Activated CD4-positive, alpha-beta T cell treated with anti-CD3 and anti-CD28 coated beads, Interleukin-2, amount 10 ng/mL, durations not matched to agents 24 days and 14 days (primary cell): ENCODE measurements at regions of chr1 and their contacts with region 1.

Region 1: DNA sequence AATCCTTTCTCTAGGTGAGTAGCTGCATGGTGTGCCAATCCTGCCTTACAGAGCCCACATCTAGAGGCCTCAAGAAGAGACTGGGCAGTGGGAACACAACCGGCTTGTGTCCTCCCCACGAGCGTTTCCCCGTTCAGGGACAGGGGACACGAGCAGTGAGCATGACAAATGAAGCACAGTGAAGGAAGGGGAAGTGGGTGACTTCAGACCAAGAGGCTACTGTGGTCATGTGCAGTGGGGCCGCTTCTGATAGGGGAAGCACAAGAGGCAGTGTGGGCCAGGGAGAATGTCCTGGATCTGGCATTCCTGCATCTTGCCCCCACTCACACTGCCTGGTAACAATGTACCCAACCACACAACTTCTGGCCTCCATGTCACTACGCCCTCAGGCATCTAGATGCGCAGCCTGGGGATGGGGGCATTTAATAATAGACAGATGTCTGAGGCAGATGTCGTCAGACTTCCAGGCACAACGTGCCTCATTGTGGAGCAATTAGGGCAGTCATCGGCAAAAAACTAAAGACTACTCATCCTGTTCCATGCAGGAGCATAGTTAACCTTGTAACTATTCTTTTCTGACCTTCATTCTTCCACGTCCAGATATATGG is 155.6 kb upstream of the NBPF11 start:
- DNase-seq: no peak
- H3K4me3 Mint-ChIP-seq: no peak overlapping the region
- H3K27ac Mint-ChIP-seq: no peak overlapping the region
- H3K4me1 Mint-ChIP-seq: peaks cover 23% of the 10 kb centered on the region
- H3K27me3 Mint-ChIP-seq: peaks cover 40% of the 10 kb centered on the region

Region 2: GRCh38 chr1:148318123-148318903 is 10.6 kb after region 1 on chr1:
- intact Hi-C with region 1: loop called (anchors 2 kb)
- DNase-seq: peak; percentile 93
- H3K4me3 Mint-ChIP-seq: peak overlapping the region; percentile 93
- H3K27ac Mint-ChIP-seq: peak overlapping the region; percentile 88
- H3K4me1 Mint-ChIP-seq: peaks cover 36% of the 10 kb centered on the region
- H3K27me3 Mint-ChIP-seq: peaks cover 44% of the 10 kb centered on the region

Region 3: DNA sequence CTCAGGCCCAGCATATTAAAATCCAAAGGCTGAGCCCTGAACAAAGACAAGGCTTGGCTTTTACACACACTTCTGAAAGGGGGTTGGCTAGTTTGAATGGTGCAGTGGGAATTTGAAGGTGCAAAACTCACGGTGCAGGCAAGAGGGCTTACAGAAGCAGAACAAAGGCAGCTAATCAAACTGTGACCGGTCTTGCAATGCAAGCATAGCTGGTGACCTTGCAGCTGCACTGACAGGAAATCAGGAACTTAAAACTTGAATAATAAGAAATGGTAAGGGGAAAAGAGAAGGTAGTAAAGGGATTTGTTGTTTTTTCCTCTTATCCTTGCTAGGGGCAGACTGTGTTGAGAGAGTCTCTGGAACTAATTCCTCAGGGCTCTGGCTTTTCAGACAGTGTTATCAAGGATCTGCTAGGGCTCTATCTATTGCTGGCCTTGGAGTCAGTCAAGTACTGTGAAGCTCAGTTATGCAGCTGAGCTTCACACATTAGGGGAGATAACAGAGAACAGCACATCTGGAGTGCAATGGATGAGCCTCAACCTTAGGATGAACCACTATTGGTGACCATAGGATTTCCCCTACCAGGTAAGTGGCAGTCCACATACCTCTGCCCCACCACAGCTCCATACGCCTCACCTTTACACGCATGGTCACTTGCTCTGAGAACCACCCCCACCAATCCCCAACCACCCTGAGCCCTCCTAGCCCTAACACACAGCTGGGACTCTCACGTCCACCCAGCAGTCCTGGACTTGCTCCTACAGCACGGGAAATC is 77.9 kb after region 1 on chr1:
- intact Hi-C with region 1: no loop called
- DNase-seq: no peak
- H3K4me3 Mint-ChIP-seq: no peak overlapping the region
- H3K27ac Mint-ChIP-seq: no peak overlapping the region
- H3K4me1 Mint-ChIP-seq: peaks cover 31% of the 10 kb centered on the region
- H3K27me3 Mint-ChIP-seq: no peaks in the 10 kb centered on the region